GM10248 (cell line): ENCODE measurements at regions of chr5 and their contacts with region 1.

Region 1: GRCh38 chr5:923281-923873 is 30.7 kb downstream of the TRIP13 start:
- DNase-seq: peak; percentile 89
- CTCF ChIP-seq: peak; percentile 89

Region 2: GRCh38 chr5:801472-801871 is 121.9 kb before region 1 on chr5:
- CTCF ChIA-PET with region 1: no interaction called
- POLR2A ChIA-PET with region 1: no interaction called
- DNase-seq: no peak
- CTCF ChIP-seq: no peak

Region 3: GRCh38 chr5:956941-957747 is 33.8 kb after region 1 on chr5:
- CTCF ChIA-PET with region 1: no interaction called
- POLR2A ChIA-PET with region 1: no interaction called
- DNase-seq: peak; percentile 74
- CTCF ChIP-seq: no peak

Region 4: DNA sequence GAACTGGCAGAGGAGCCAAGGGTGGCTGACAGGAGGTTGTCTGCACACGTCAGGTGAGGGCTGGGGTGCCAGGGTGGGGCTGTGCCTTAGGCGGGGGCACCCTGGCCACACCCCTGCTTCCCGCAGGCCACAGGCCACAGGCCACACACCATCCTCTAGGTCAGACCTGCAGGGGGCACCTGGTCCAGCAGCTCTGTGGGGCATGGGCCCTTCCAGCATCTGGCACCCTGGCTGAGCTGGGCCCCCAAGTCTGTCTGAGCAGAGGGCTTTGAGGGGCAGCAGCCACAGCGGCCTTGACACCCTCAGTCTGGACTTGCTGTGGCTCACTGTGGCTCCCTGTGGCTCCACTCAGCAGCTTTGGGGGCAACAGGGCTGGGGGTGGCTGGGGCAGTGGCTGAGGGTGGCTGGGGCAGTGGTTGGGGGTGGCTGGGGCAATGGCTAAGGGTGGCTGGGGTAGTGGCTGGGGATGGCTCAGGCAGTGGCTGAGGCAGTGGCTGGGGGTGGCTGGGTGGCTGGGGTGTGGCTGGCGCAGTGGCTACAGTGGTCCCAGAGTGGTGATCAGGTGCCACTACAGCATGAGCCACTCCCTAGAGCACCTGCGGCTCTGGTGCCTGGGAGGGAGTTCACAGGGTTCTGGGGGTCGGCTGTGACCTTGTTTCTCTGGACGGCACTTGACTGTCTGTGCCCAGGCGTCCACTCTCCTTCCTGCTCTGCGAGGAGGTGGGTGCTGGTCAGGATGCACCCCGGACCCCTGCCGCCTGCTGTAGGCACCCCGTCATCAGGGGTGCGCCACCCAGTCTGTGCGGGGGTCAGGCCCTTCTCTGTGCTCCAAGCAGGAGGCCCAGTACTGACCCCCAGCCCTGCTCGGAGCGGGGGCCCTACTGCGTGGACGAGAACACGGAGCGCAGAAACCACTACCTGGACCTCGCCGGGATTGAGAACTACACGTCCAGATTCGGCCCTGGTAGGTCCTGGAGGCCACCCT is 112.3 kb after region 1 on chr5:
- CTCF ChIA-PET with region 1: no interaction called
- POLR2A ChIA-PET with region 1: no interaction called
- DNase-seq: no peak
- CTCF ChIP-seq: no peak

Region 5: DNA sequence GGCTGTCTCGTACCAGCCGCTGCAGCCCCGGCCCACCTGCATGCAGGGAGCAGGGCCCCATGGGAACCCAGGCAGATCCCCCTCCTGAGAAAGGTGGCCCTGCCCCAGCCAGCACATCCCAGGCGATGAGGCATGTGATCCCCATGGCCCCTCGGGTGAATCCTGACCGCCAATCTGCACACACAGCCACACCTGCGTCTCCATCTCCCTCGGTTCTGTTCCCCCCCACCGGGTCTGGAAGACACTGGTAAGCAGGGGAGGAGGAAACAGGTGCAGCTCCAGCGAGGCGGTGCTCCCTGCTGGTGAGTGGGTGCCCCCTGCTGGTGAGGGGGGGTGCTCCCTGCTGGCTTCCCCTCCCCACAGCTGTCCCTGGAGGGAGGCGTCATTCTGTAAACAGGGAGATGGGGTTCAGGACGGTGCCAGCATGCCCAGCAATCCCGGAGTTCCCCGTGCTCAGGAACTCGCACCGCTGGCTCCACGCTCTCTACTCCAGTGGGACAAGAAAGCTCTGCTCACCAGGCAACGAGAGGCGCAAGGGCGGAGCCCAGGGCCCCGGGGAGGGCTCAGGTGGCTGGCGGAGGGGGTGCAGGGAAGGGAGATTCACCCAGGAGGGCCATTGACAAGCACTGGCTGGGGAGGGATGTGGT is 216.9 kb after region 1 on chr5:
- CTCF ChIA-PET with region 1: interaction called, 14 read pairs
- POLR2A ChIA-PET with region 1: no interaction called
- DNase-seq: peak; percentile 87
- CTCF ChIP-seq: peak; percentile 77

Region 6: GRCh38 chr5:1161833-1162229 is 238.5 kb after region 1 on chr5:
- CTCF ChIA-PET with region 1: no interaction called
- POLR2A ChIA-PET with region 1: interaction called, 11 read pairs
- DNase-seq: no peak
- CTCF ChIP-seq: no peak

Region 7: DNA sequence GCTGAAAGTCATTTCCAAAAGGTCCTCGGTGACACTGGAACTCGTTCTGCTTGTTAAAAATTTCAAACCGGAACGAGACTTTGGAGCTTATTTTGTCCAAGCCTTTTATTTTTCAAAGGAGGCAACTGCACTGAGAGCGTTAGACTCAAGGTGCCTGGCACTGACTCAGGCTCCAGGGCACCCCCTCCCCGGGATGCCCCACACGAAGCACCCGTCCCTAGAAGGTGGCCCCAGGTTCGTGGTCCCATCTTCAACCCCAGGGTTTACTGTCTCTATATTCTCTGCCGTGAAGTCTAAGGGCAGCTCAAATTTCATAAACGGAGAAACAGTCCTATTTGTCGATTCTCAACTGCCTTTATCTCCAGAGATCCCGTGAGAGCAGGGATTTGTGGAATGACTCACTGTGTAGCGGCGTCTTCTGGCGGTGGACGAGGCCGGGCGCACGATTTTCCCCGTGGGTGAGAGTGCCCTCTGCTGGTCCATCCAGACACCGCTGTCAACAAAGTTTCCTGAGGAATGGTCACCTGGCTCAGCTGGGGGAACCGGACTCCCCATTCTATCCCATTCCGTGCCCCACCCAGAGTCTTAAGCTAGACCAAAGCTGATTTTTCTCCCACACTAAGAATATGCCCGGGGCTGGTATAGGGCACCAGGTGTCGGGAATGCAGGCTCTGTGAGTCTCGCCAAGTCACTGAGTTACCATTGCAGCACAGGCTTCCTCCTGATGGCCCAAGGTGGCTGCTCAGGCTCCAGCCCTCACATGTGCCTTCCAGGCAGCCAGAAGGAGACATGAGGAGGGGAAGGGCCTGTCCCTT is 251.0 kb after region 1 on chr5:
- CTCF ChIA-PET with region 1: interaction called, 14 read pairs
- POLR2A ChIA-PET with region 1: no interaction called
- DNase-seq: peak; percentile 72
- CTCF ChIP-seq: peak; percentile 57

Region 8: GRCh38 chr5:1344975-1345838 is 421.8 kb after region 1 on chr5 and contains the start of gene CLPTM1L:
- CTCF ChIA-PET with region 1: no interaction called
- POLR2A ChIA-PET with region 1: no interaction called
- DNase-seq: peak; percentile 99
- CTCF ChIP-seq: no peak